Left colon (tissue), 2 donors: ENCODE measurements at regions of chr19 and their contacts with region 1.

Region 1: GRCh38 chr19:10695401-10696398 is 5.5 kb upstream of the QTRT1 start:
- DNase-seq: peak; percentile 93 to 96
- ATAC-seq: peak; percentile 99

Region 2: DNA sequence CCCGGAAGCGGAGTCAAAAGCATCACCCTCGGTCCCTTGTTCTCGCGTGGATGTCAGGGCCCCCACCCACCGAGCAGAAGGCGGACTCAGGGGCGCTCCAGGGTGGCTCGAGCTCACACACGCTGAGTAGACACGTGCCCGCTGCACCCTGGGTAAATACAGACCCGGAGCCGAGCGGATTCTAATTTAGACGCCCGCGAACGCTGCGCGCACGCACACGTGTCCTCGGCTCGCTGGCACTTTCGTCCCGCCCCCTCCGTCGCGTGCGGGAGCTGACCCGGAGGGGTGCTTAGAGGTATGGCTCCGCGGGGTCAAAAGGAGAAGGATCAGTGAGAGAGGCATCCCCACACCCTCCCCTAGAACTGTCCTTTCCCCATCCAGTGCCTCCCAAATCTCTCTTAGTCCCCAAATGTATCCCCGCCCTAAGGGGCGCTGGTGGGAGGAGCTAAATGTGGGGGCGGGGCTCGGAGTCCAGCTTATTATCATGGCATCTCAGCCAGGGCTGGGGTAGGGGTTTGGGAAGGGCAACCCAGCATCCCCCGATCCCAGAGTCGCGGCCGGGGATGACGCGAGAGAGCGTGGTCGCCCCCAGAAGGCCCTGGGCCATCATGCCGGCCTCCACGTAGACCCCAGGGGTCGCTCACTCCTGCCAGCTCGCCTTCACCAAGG is 406.4 kb before region 1 on chr19:
- intact Hi-C with region 1: loop called in 1 of 2 experiments (anchors 10 kb)
- DNase-seq: peak; percentile 31 to 60
- ATAC-seq: no peak

Region 3: GRCh38 chr19:10911579-10912363 is 216.1 kb after region 1 on chr19:
- intact Hi-C with region 1: no loop called
- DNase-seq: no peak
- ATAC-seq: no peak